CD4-positive, alpha-beta T cell (primary cell): ENCODE measurements at regions of chr12 and their contacts with region 1.

Region 1: GRCh38 chr12:67648521-67649260 is at the start of gene DYRK2:
- DNase-seq: peak; percentile 60 to 93 (median 79)
- ATAC-seq: peak; percentile 54
- H3K4me3 ChIP-seq: peak within 1 kb of the TSS; percentile 72
- H3K4me3 Mint-ChIP-seq: peak within 1 kb of the TSS; percentile 94
- H3K27ac ChIP-seq: peak within 1 kb of the TSS; percentile 71 to 85
- H3K27ac Mint-ChIP-seq: peak within 1 kb of the TSS; percentile 94
- H3K4me1 ChIP-seq: peaks cover 31% of the 10 kb centered on the region
- H3K4me1 Mint-ChIP-seq: peaks cover 40% of the 10 kb centered on the region
- H3K27me3 ChIP-seq: no peaks in the 10 kb centered on the region
- H3K27me3 Mint-ChIP-seq: no peaks in the 10 kb centered on the region
- CTCF ChIP-seq: no peak
- total RNA-seq, gene DYRK2: 123 to 135 TPM

Region 2: DNA sequence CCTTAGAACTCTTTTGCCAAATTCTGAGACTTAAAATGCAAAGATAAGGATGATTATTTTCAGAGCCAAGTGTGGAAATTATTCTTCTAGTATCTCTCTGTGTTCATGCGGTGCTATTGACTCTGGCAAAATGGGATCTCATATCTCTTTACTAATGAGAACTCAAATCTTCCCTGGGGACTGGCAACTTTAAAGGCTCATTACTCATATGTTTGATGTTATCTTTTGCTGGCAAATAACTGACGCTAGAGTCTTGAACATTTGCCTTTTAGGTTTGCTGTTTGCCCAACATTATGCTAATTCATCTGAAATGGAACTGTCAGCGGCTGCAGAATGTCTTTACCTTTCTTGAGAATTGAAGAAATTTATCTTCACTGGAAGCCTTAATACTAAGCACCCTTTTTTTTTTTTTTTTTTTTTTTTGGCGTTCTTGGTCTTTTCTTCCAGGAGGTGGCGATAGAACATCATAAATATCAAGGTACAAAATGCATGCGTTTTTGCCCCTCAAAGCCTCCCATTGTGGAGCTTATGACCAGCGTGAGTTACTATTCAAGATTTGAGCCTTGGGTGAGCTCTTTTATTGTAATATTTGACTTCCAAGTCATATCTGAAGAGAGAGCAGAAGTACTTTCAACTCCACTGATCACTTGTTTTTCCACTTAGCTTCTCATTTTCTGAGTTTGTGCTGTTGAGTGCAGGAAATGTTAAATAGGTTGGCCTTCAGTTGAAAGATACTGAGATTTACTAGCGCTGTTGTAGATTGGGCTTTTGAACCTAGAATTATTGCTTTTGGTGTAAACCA is 292.9 kb before region 1 on chr12:
- CTCF ChIA-PET with region 1: interaction called, 7 read pairs
- POLR2A ChIA-PET with region 1: interaction called, 11 read pairs
- intact Hi-C with region 1: loop called in 1 of 2 experiments (anchors 5 kb)
- DNase-seq: peak in 5 of 14 experiments; percentile 4 to 78 (median 63)
- ATAC-seq: peak; percentile 66
- H3K4me3 ChIP-seq: no peak overlapping the region
- H3K4me3 Mint-ChIP-seq: peak overlapping the region; percentile 11
- H3K27ac ChIP-seq: no peak overlapping the region
- H3K27ac Mint-ChIP-seq: no peak overlapping the region
- H3K4me1 ChIP-seq: peaks cover 4% of the 10 kb centered on the region
- H3K4me1 Mint-ChIP-seq: peaks cover 13% of the 10 kb centered on the region
- H3K27me3 ChIP-seq: no peaks in the 10 kb centered on the region
- H3K27me3 Mint-ChIP-seq: no peaks in the 10 kb centered on the region
- CTCF ChIP-seq: peak; percentile 87

Region 3: GRCh38 chr12:67482751-67483671 is 165.7 kb before region 1 on chr12:
- CTCF ChIA-PET with region 1: no interaction called
- POLR2A ChIA-PET with region 1: interaction called, 47 read pairs
- intact Hi-C with region 1: loop called in 1 of 2 experiments (anchors 5 kb)
- DNase-seq: peak; percentile 58 to 95 (median 84)
- ATAC-seq: peak; percentile 92
- H3K4me3 ChIP-seq: no peak overlapping the region
- H3K4me3 Mint-ChIP-seq: peak overlapping the region; percentile 23
- H3K27ac ChIP-seq: peak overlapping the region; percentile 3 to 66
- H3K27ac Mint-ChIP-seq: peak overlapping the region; percentile 84
- H3K4me1 ChIP-seq: peaks cover 47% of the 10 kb centered on the region
- H3K4me1 Mint-ChIP-seq: peaks cover 52% of the 10 kb centered on the region
- H3K27me3 ChIP-seq: no peaks in the 10 kb centered on the region
- H3K27me3 Mint-ChIP-seq: no peaks in the 10 kb centered on the region
- CTCF ChIP-seq: no peak

Region 4: DNA sequence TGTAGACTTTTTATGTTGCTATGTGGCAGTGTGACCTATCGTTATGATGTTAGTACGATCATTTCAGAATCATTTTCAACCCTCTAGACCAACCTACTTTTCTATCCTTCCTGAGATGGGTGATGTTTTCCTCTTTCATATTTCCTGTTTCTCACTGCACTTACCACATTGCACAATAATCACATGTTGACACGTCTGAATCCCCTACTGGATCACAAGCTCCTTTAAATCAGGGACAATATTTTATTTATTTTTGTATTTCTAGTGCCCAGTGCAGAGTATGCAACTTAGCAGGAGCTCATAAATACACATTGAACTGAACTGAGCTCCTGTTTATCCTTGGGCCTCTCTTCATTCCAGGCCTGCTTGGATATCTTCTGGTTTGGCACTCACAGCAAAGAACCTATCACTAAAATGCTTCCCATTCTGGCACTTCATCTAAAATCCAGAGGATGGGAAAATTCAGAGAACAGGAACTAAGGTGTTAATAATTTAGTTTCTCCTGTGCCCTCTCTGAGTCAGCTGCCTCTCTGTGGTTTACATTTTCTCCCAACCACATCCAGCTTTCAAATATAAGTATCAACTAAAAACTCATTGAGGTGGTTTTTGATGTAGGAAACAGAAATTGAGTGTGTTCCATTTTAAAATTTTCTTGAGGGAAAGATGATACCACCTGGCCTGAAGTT is 69.6 kb before region 1 on chr12:
- CTCF ChIA-PET with region 1: no interaction called
- POLR2A ChIA-PET with region 1: interaction called, 80 read pairs
- intact Hi-C with region 1: loop called in 1 of 2 experiments (anchors 5 kb)
- DNase-seq: peak in 6 of 14 experiments; percentile 4 to 88 (median 46)
- ATAC-seq: peak; percentile 79
- H3K4me3 ChIP-seq: peak overlapping the region; percentile 1
- H3K4me3 Mint-ChIP-seq: peak overlapping the region; percentile 58
- H3K27ac ChIP-seq: peak overlapping the region in 1 of 2 donors; percentile 32
- H3K27ac Mint-ChIP-seq: peak overlapping the region; percentile 22
- H3K4me1 ChIP-seq: peaks cover 22% of the 10 kb centered on the region
- H3K4me1 Mint-ChIP-seq: peaks cover 63% of the 10 kb centered on the region
- H3K27me3 ChIP-seq: no peaks in the 10 kb centered on the region
- H3K27me3 Mint-ChIP-seq: no peaks in the 10 kb centered on the region
- CTCF ChIP-seq: no peak

Region 5: DNA sequence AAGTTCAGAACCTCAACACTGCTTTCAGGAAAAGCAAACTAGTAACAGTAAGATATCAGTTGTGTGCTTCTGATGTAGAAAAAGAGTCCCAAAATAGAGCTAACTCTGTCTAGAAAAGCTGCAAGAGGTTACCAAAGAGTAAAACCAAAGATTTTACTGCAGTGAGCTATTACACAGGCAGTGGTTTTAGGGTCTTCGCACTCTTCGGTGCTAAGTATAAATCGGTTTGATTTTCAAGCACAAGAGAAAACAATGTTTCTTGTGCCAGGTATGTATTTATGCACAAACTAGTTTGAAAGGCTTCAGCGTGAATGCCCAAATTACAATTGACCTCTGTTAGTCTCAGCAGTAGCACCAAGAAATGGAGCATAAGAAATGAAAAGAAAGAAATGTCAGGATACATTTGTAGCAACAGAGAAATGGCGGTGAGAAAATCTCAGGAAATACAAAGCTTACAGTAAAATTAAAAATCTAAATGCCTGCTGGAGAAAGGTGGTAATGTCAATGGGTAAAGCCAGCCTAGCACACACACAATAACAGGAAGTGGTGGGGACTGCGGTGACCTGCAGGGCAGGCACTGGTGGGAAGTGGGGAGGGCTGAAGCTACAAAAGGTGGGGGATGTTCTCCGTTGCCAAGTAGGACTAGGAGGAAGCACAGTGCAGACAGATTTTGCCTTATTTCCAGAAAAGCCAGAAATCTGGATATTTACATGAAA is 18.2 kb before region 1 on chr12:
- CTCF ChIA-PET with region 1: interaction called, 29 read pairs
- POLR2A ChIA-PET with region 1: interaction called, 275 read pairs
- intact Hi-C with region 1: loop called (anchors 1 kb)
- DNase-seq: peak; percentile 67 to 98 (median 86)
- ATAC-seq: peak; percentile 99
- H3K4me3 ChIP-seq: peak overlapping the region; percentile 19
- H3K4me3 Mint-ChIP-seq: peak overlapping the region; percentile 73
- H3K27ac ChIP-seq: peak overlapping the region; percentile 69 to 77
- H3K27ac Mint-ChIP-seq: peak overlapping the region; percentile 90
- H3K4me1 ChIP-seq: peaks cover 44% of the 10 kb centered on the region
- H3K4me1 Mint-ChIP-seq: peaks cover 91% of the 10 kb centered on the region
- H3K27me3 ChIP-seq: no peaks in the 10 kb centered on the region
- H3K27me3 Mint-ChIP-seq: no peaks in the 10 kb centered on the region
- CTCF ChIP-seq: no peak

Region 6: DNA sequence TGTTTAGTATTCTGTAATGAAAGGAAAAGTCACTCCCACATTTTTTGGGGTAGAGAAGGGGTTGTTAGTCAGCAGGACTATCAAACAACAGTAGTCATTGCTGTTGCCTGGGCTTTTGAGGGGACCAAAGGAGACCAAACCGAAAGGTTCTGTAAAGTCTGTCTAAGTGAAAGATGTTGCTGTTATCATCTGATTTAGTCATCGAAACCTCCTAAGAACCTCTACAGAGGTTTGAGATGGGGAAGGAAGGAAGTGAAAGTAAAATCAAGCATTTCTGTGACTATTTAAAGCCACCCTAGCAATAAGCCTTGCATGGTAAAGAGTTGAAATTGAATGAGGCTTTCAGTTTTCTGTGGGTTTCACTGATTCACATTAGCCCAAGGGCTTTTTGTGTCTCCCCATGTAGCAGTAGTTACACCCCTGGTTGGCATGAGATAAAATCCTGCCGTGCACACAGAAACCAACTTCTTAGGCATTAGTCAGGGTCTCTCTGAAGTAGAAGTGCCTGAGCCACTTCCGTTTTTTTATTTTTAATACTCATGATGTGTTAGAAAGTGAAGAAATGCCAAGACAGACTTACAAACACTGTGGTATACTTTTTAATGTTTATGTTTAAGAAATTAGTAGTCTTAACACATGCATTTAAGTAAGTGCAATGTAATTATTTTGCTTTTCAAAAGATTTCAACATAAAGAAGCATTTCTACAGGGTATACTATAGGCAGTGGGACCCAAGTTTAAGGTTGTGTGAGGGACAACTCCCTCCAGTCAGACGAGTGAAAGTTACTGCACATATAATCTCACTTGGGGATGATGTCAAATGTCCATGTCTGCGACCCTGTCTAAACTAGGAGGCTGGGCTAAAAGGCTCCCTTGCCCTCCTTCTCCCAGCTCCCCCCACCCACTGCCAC is 50.2 kb after region 1 on chr12:
- CTCF ChIA-PET with region 1: no interaction called
- POLR2A ChIA-PET with region 1: interaction called, 3 read pairs
- intact Hi-C with region 1: loop called in 1 of 2 experiments (anchors 2 kb)
- DNase-seq: peak in 13 of 14 experiments; percentile 19 to 72 (median 40)
- ATAC-seq: peak; percentile 79
- H3K4me3 ChIP-seq: peak overlapping the region; percentile 49
- H3K4me3 Mint-ChIP-seq: peak overlapping the region; percentile 85
- H3K27ac ChIP-seq: peak overlapping the region; percentile 30 to 56
- H3K27ac Mint-ChIP-seq: peak overlapping the region; percentile 85
- H3K4me1 ChIP-seq: peaks cover 31% of the 10 kb centered on the region
- H3K4me1 Mint-ChIP-seq: peaks cover 65% of the 10 kb centered on the region
- H3K27me3 ChIP-seq: no peaks in the 10 kb centered on the region
- H3K27me3 Mint-ChIP-seq: no peaks in the 10 kb centered on the region
- CTCF ChIP-seq: no peak

Region 7: DNA sequence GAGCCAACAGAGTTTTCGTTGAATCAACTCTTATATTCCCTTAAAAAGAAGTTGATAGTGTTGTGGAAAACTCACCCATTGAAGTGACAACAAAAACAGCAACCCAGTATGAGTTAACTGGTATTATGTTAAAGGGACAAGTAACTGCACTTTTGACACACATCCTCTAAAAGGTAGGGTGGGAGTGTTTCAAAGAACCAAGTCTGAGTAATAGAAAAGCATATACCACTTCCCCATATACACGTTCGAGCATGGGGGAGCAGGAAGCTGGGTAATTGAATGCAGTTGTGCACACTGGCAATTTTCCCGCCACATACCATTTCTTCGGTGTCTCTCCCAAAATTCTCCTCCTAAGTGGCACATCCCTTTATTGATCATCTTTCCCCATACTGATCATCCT is 372.0 kb after region 1 on chr12:
- CTCF ChIA-PET with region 1: no interaction called
- POLR2A ChIA-PET with region 1: no interaction called
- intact Hi-C with region 1: no loop called
- DNase-seq: no peak
- ATAC-seq: no peak
- H3K4me3 ChIP-seq: no peak overlapping the region
- H3K4me3 Mint-ChIP-seq: no peak overlapping the region
- H3K27ac ChIP-seq: no peak overlapping the region
- H3K27ac Mint-ChIP-seq: no peak overlapping the region
- H3K4me1 ChIP-seq: no peaks in the 10 kb centered on the region
- H3K4me1 Mint-ChIP-seq: no peaks in the 10 kb centered on the region
- H3K27me3 ChIP-seq: no peaks in the 10 kb centered on the region
- H3K27me3 Mint-ChIP-seq: no peaks in the 10 kb centered on the region
- CTCF ChIP-seq: no peak